CD4-positive, alpha-beta memory T cell (primary cell): ENCODE measurements at regions of chr2 and their contacts with region 1.

Region 1: DNA sequence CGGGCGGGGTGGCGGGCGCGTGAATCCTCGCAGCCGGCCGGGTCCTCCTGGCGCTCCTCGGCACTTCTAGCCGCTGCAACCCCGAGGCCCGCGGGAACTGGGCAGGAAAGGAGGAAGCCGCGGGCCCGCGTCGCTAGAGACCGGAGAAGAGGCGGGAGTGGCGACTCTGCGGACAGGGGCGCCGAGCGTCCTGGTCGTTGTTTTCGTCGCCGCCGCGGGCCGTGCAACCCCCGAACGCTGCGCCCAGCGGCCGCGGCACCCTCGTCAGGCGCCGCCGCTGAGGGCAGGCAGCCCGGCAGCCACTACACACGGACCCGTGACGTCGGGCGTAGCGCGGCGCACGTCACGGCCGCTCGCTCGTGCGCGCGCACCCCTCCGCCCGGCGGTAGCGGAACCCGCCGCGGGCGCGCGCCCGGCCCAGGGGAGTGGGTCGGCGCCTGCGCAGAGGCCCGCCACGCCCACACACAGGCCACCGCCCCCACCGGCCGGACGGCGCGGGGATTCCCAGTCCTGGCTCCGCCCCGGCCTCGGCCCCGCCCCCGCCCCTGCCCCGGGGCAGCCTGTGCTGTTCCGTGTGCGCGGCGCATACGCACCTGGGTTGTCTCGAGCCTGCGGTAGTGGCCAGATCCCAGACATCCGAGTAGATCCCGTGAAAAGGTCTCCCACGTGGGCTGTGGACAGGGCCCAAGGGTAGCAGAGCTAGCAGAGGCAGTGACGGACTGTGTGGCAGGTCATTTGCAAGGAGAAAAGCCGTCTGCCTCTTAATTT is at the start of gene MAP3K2:
- DNase-seq: peak; percentile 92 to 94 (median 93)
- H3K4me3 ChIP-seq: peak within 1 kb of the TSS; percentile 62 to 65
- H3K4me3 Mint-ChIP-seq: peak within 1 kb of the TSS; percentile 89 to 97 (median 94)
- H3K27ac ChIP-seq: peak within 1 kb of the TSS; percentile 97
- H3K27ac Mint-ChIP-seq: peak within 1 kb of the TSS; percentile 99 to 100 (median 99)
- H3K4me1 ChIP-seq: peaks cover 46% of the 10 kb centered on the region
- H3K4me1 Mint-ChIP-seq: peaks cover 49 to 71% (median 54%) of the 10 kb centered on the region in 4 donors
- H3K27me3 ChIP-seq: no peaks in the 10 kb centered on the region
- H3K27me3 Mint-ChIP-seq: no peaks in the 10 kb centered on the region
- total RNA-seq, gene MAP3K2: 85.6 to 87.2 TPM

Region 2: GRCh38 chr2:127293748-127294562 is 93.9 kb before region 1 on chr2 and contains the start of gene ERCC3:
- CTCF ChIA-PET with region 1: no interaction called
- POLR2A ChIA-PET with region 1: interaction called, 11 read pairs
- intact Hi-C with region 1: no loop called
- DNase-seq: peak; percentile 70 to 82 (median 72)
- H3K4me3 ChIP-seq: peak within 1 kb of the TSS; percentile 63 to 96
- H3K4me3 Mint-ChIP-seq: peak within 1 kb of the TSS; percentile 96 to 99 (median 98)
- H3K27ac ChIP-seq: peak within 1 kb of the TSS; percentile 86
- H3K27ac Mint-ChIP-seq: peak within 1 kb of the TSS; percentile 86 to 98 (median 95)
- H3K4me1 ChIP-seq: peaks cover 13% of the 10 kb centered on the region
- H3K4me1 Mint-ChIP-seq: peaks cover 23 to 50% (median 28%) of the 10 kb centered on the region in 4 donors
- H3K27me3 ChIP-seq: no peaks in the 10 kb centered on the region
- H3K27me3 Mint-ChIP-seq: no peaks in the 10 kb centered on the region
- total RNA-seq, gene ERCC3: 59.2 to 62.9 TPM

Region 3: GRCh38 chr2:127398239-127398590 is 10.4 kb after region 1 on chr2:
- CTCF ChIA-PET with region 1: interaction called, 3 read pairs
- POLR2A ChIA-PET with region 1: interaction called, 10 read pairs
- intact Hi-C with region 1: no loop called
- DNase-seq: peak in 1 of 5 donors; percentile 73
- H3K4me3 ChIP-seq: no peak overlapping the region
- H3K4me3 Mint-ChIP-seq: no peak overlapping the region
- H3K27ac ChIP-seq: no peak overlapping the region
- H3K27ac Mint-ChIP-seq: peak overlapping the region in 2 of 7 donors; percentile 13 to 62
- H3K4me1 ChIP-seq: peaks cover 3% of the 10 kb centered on the region
- H3K4me1 Mint-ChIP-seq: no peaks in the 10 kb centered on the region
- H3K27me3 ChIP-seq: no peaks in the 10 kb centered on the region
- H3K27me3 Mint-ChIP-seq: peaks cover 0 to 9% of the 10 kb centered on the region in 2 donors

Region 4: GRCh38 chr2:127415593-127416505 is 28.0 kb after region 1 on chr2:
- CTCF ChIA-PET with region 1: interaction called, 13 read pairs
- POLR2A ChIA-PET with region 1: interaction called, 104 read pairs
- intact Hi-C with region 1: loop called (anchors 2 kb)
- DNase-seq: peak; percentile 80 to 94 (median 82)
- H3K4me3 ChIP-seq: peak overlapping the region; percentile 55 to 88
- H3K4me3 Mint-ChIP-seq: peak overlapping the region; percentile 84 to 93 (median 86)
- H3K27ac ChIP-seq: peak overlapping the region; percentile 45
- H3K27ac Mint-ChIP-seq: peak overlapping the region; percentile 73 to 92 (median 79)
- H3K4me1 ChIP-seq: peaks cover 26% of the 10 kb centered on the region
- H3K4me1 Mint-ChIP-seq: peaks cover 14 to 37% (median 25%) of the 10 kb centered on the region in 4 donors
- H3K27me3 ChIP-seq: no peaks in the 10 kb centered on the region
- H3K27me3 Mint-ChIP-seq: peaks cover 1 to 4% of the 10 kb centered on the region in 2 donors

Region 5: DNA sequence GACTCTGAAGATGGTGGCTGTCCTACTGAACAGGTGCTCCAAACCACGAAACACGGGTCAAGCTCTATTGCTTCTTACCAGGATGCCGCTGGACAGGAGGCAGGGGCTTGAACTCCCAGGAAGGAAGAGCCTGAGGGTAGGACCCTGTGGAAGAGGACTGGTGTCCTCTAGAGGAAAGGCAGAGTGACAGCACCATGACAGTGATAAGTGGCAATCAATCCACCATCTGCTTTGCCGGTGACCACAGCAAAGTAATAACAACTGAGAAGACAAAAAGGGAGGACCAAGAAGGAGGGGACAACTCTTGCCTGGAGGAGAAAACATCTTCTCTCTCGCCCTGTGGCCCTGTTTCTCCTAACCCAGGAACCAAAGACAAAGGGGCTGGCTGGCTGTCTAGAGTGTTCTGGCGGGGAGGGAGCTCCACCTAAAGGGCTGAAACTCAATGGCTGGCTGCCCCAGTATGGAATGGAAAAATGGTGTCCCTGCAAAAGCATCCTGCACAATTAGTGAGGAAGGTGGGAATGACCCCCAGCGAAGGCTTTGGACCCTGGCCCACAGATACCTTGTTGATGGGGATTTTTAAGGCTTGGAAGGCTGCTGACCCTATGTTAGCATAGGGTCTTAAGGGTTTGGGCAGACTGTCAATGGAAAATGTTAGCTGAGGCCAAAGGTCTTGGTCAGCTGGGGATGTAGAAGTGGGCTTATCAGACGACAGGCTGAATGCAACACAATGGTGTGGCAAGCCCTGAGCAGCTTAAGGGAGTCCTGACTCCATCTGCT is 65.7 kb after region 1 on chr2:
- CTCF ChIA-PET with region 1: no interaction called
- POLR2A ChIA-PET with region 1: no interaction called
- intact Hi-C with region 1: no loop called
- DNase-seq: no peak
- H3K4me3 ChIP-seq: no peak overlapping the region
- H3K4me3 Mint-ChIP-seq: no peak overlapping the region
- H3K27ac ChIP-seq: no peak overlapping the region
- H3K27ac Mint-ChIP-seq: no peak overlapping the region
- H3K4me1 ChIP-seq: peaks cover 14% of the 10 kb centered on the region
- H3K4me1 Mint-ChIP-seq: peaks cover 8 to 23% (median 13%) of the 10 kb centered on the region in 4 donors
- H3K27me3 ChIP-seq: no peaks in the 10 kb centered on the region
- H3K27me3 Mint-ChIP-seq: peaks cover 0 to 1% of the 10 kb centered on the region in 2 donors

Region 6: GRCh38 chr2:127701193-127701650 is 313.4 kb after region 1 on chr2 and contains the start of gene SFT2D3:
- CTCF ChIA-PET with region 1: no interaction called
- POLR2A ChIA-PET with region 1: interaction called, 10 read pairs
- intact Hi-C with region 1: loop called (anchors 1 kb)
- DNase-seq: peak; percentile 89 to 92 (median 91)
- H3K4me3 ChIP-seq: peak within 1 kb of the TSS; percentile 74 to 93
- H3K4me3 Mint-ChIP-seq: peak within 1 kb of the TSS; percentile 91 to 95 (median 92)
- H3K27ac ChIP-seq: peak within 1 kb of the TSS; percentile 90
- H3K27ac Mint-ChIP-seq: peak within 1 kb of the TSS; percentile 97 to 99 (median 98)
- H3K4me1 ChIP-seq: peaks cover 42% of the 10 kb centered on the region
- H3K4me1 Mint-ChIP-seq: peaks cover 25 to 53% (median 34%) of the 10 kb centered on the region in 4 donors
- H3K27me3 ChIP-seq: no peaks in the 10 kb centered on the region
- H3K27me3 Mint-ChIP-seq: no peaks in the 10 kb centered on the region
- total RNA-seq, gene SFT2D3: 14.4 to 15.4 TPM

Region 7: DNA sequence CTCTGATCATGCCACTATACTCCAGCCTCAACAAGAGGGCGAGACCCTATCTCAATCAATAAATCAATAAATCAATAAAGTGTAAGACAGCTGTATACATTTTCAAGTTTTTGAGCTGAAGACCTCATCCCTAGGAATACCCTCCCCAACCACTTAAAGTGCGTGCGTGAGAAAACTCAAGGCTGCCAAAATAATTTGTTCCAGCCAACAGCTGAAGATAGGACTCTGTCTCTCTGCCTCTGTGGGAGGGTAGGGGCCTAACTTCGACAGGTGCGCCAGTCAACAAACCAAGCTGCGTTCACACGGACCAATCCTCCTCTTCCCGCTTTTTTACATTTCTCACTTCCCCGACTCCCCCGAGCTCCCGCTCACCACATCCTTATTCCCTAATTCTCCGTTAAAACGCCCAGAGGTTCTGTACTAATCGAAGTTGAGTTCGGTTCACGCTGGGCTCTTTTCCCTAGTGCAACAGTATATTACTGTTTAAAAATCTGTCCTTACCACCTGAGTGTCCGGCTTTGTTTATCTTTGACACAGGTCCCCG is 469.5 kb after region 1 on chr2:
- CTCF ChIA-PET with region 1: no interaction called
- POLR2A ChIA-PET with region 1: no interaction called
- intact Hi-C with region 1: loop called (anchors 5 kb)
- DNase-seq: peak in 1 of 5 donors; percentile 11
- H3K4me3 ChIP-seq: peak overlapping the region; percentile 70 to 78
- H3K4me3 Mint-ChIP-seq: peak overlapping the region; percentile 89 to 98 (median 93)
- H3K27ac ChIP-seq: peak overlapping the region; percentile 80
- H3K27ac Mint-ChIP-seq: peak overlapping the region; percentile 73 to 96 (median 93)
- H3K4me1 ChIP-seq: peaks cover 53% of the 10 kb centered on the region
- H3K4me1 Mint-ChIP-seq: peaks cover 26 to 62% (median 41%) of the 10 kb centered on the region in 4 donors
- H3K27me3 ChIP-seq: no peaks in the 10 kb centered on the region
- H3K27me3 Mint-ChIP-seq: no peaks in the 10 kb centered on the region